ENCODE measurements at regions of chr1 and their contacts with region 1.

Region 1: GRCh38 chr1:89804642-89805237 is 16.1 kb upstream of the LRRC8D start:
- DNase-seq: peak; percentile 88

Region 2: GRCh38 chr1:89394851-89395250 is 409.9 kb before region 1 on chr1:
- intact Hi-C with region 1: no loop called
- DNase-seq: no peak

Region 3: GRCh38 chr1:89987170-89987819 is 182.6 kb after region 1 on chr1:
- intact Hi-C with region 1: loop called (anchors 5 kb)
- DNase-seq: no peak

Region 4: GRCh38 chr1:89994805-89995597 is 190.3 kb after region 1 on chr1 and contains the start of gene ZNF326:
- intact Hi-C with region 1: loop called in 1 of 2 experiments (anchors 5 kb)
- DNase-seq: peak; percentile 98
- total RNA-seq, gene ZNF326: 19.4 to 19.6 TPM

Region 5: GRCh38 chr1:90187323-90187585 is 382.5 kb after region 1 on chr1:
- intact Hi-C with region 1: no loop called
- DNase-seq: no peak